IMR-90 (cell line): ENCODE measurements at regions of chr3 and their contacts with region 1.

Region 1: DNA sequence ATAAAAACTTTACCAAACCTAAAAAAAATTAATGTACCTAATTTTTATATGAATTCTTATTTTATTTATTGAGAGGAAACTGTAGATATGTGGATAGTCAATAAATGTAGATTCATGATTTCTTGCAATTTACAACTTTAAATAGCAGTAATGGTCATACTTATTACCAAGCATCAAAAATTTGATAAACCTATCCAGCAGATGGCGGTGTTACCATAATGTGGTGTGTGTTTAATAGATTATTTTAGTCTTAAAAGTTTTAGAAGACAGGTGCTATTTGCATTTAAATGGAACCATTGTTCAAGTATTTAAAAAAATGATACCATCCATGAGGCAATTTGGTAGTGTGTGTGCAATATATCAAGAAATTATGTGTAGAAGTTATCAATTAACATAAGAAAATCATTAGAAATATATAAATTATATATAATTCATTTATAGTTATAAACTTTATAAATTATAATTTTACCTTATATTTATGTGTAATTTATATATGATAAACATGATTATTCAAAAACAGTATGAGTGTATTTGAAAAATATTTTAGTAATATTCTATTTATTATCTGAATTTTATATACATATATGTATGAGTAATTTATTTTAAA is 176.0 kb upstream of the BCHE start:
- DNase-seq: peak; percentile 37
- ATAC-seq: no peak
- H3K4me3 ChIP-seq: no peak overlapping the region
- H3K27ac ChIP-seq: no peak overlapping the region
- H3K4me1 ChIP-seq: no peaks in the 10 kb centered on the region
- H3K27me3 ChIP-seq: no peaks in the 10 kb centered on the region
- CTCF ChIP-seq: peak; percentile 54
- POLR2A ChIP-seq: no peak
- RAD21 ChIP-seq: peak; percentile 65

Region 2: DNA sequence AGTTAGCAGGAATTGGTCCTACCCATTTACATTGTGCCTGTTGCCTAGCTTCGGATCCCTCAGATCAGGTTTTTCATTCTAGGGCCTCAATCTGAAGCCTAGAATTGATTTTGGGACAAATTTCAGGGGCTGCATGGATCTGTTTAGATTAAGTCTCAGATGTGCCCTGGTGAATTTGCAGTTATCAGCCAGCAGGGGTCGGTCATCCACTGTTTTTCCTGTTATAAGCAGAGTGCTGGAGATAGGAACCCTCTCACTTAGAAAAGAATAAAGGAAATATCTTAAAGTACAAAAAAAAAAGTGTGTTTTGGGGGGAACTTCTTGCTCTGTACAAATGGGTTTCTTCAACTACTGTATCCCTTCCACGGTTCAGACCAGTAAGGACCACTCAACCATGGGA is 388.4 kb before region 1 on chr3:
- CTCF ChIA-PET with region 1: no interaction called
- POLR2A ChIA-PET with region 1: no interaction called
- dilution Hi-C with region 1: no loop called
- in situ Hi-C with region 1: no loop called
- intact Hi-C with region 1: loop called (anchors 10 kb)
- DNase-seq: peak; percentile 50
- ATAC-seq: peak; percentile 88
- H3K4me3 ChIP-seq: no peak overlapping the region
- H3K27ac ChIP-seq: no peak overlapping the region
- H3K4me1 ChIP-seq: no peaks in the 10 kb centered on the region
- H3K27me3 ChIP-seq: no peaks in the 10 kb centered on the region
- CTCF ChIP-seq: peak; percentile 63
- POLR2A ChIP-seq: no peak
- RAD21 ChIP-seq: peak; percentile 73

Region 3: DNA sequence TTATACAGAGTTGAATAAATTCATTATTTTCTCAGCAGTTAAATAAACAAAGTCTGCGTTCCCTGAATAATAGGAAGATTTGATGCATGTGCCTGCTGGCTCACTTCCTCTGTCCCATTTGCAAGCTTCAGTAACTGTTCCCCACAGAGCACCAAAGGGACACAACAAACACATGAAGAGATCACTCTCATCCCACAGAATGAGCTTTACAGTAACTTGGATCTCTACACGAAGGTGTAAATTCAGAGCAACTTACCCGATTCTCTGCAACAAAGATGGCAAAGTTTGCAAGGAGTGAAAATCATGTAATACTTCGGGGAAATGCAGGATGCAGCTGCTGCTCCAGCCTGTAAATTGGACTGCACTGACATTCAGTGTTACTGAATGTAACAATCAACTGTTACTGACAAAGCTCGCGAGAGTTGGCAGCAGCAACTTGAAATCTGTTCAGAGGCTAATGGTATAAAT is 176.1 kb before region 1 on chr3 and contains the start of gene BCHE:
- CTCF ChIA-PET with region 1: no interaction called
- POLR2A ChIA-PET with region 1: no interaction called
- dilution Hi-C with region 1: no loop called
- in situ Hi-C with region 1: no loop called
- intact Hi-C with region 1: no loop called
- DNase-seq: peak; percentile 30
- ATAC-seq: 0 out of 2 replicates have a peak, but pooled peaks have one; percentile 11
- H3K4me3 ChIP-seq: no peak within 1 kb of the TSS
- H3K27ac ChIP-seq: no peak within 1 kb of the TSS
- H3K4me1 ChIP-seq: no peaks in the 10 kb centered on the region
- H3K27me3 ChIP-seq: no peaks in the 10 kb centered on the region
- CTCF ChIP-seq: no peak
- POLR2A ChIP-seq: no peak
- RAD21 ChIP-seq: no peak
- total RNA-seq, gene BCHE: 1.6 and 1.9 TPM in 2 replicates

Region 4: DNA sequence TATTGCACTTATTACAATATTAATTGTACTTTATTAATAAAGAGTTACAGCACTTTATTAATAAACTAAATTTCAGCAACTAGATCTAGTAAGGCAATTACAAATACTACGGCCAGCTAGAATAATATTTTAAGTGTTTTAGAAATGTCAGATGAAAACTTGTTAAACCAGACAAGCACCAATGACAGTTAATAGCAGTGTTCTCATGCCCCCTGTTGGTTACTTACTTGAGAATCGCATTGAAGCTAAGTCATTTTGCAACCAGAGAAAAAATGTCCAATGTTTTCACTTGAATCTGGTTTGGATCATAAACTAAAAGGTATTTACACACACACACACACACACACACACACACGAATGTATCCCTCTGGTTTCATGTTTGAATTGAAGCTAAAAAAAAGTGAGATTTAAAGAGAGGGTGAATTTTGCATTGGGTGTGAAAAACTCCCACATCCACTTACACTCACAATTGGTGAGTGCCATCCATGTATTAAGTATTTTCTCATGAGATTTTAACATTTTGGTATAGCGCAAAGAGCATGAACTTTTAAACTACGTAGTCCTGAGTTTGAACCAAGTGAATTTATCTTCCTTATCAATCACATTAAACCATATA is 1019.2 kb after region 1 on chr3:
- CTCF ChIA-PET with region 1: interaction called, 5 read pairs
- POLR2A ChIA-PET with region 1: no interaction called
- dilution Hi-C with region 1: no loop called
- in situ Hi-C with region 1: loop called (anchors 25 kb)
- intact Hi-C with region 1: loop called (anchors 2 kb)
- DNase-seq: peak; percentile 39
- ATAC-seq: no peak
- H3K4me3 ChIP-seq: no peak overlapping the region
- H3K27ac ChIP-seq: no peak overlapping the region
- H3K4me1 ChIP-seq: no peaks in the 10 kb centered on the region
- H3K27me3 ChIP-seq: no peaks in the 10 kb centered on the region
- CTCF ChIP-seq: peak; percentile 52
- POLR2A ChIP-seq: no peak
- RAD21 ChIP-seq: peak; percentile 70

Region 5: GRCh38 chr3:167684388-167684993 is 1671.3 kb after region 1 on chr3:
- CTCF ChIA-PET with region 1: no interaction called
- POLR2A ChIA-PET with region 1: no interaction called
- dilution Hi-C with region 1: no loop called
- in situ Hi-C with region 1: no loop called
- intact Hi-C with region 1: loop called (anchors 10 kb)
- DNase-seq: peak; percentile 58
- ATAC-seq: peak; percentile 65; the same call in 1 of the 2 replicates
- H3K4me3 ChIP-seq: no peak overlapping the region
- H3K27ac ChIP-seq: no peak overlapping the region
- H3K4me1 ChIP-seq: no peaks in the 10 kb centered on the region
- H3K27me3 ChIP-seq: no peaks in the 10 kb centered on the region
- CTCF ChIP-seq: peak; percentile 58
- POLR2A ChIP-seq: no peak
- RAD21 ChIP-seq: peak; percentile 18; the same call in 1 of the 2 replicates

Region 6: GRCh38 chr3:167882067-167882667 is 1869.0 kb after region 1 on chr3:
- CTCF ChIA-PET with region 1: no interaction called
- POLR2A ChIA-PET with region 1: no interaction called
- dilution Hi-C with region 1: no loop called
- in situ Hi-C with region 1: no loop called
- intact Hi-C with region 1: loop called (anchors 5 kb)
- DNase-seq: peak; percentile 60
- ATAC-seq: peak; percentile 74
- H3K4me3 ChIP-seq: no peak overlapping the region
- H3K27ac ChIP-seq: no peak overlapping the region
- H3K4me1 ChIP-seq: no peaks in the 10 kb centered on the region
- H3K27me3 ChIP-seq: no peaks in the 10 kb centered on the region
- CTCF ChIP-seq: peak; percentile 62
- POLR2A ChIP-seq: no peak
- RAD21 ChIP-seq: peak; percentile 49